Left ventricle myocardium superior (tissue), 1 donor: ENCODE measurements at regions of chr11 and their contacts with region 1.

Region 1: GRCh38 chr11:128039140-128040021 is 548.0 kb downstream of the ETS1 start:
- DNase-seq: peak; percentile 35
- ATAC-seq: peak; percentile 71

Region 2: GRCh38 chr11:128157423-128158298 is 118.3 kb after region 1 on chr11:
- intact Hi-C with region 1: loop called (anchors 5 kb)
- DNase-seq: no peak
- ATAC-seq: peak; percentile 78